GM12878 (cell line): ENCODE measurements at regions of chr17 and their contacts with region 1.

Region 1: GRCh38 chr17:47949136-47949759 is 7.9 kb downstream of the PNPO start:
- DNase-seq: peak; percentile 53
- ATAC-seq: peak; percentile 92
- H3K4me3 ChIP-seq: peak overlapping the region; percentile 41; the same call in 1 of the 2 replicates
- H3K27ac ChIP-seq: peak overlapping the region; percentile 74
- H3K4me1 ChIP-seq: peaks cover 44% of the 10 kb centered on the region
- H3K27me3 ChIP-seq: no peaks in the 10 kb centered on the region
- CTCF ChIP-seq: peak; percentile 91 to 94 (median 94)
- EP300 ChIP-seq: peak in 1 of 2 experiments; percentile 45; a peak in 1 of 4 replicates
- POLR2A ChIP-seq: no peak
- RAD21 ChIP-seq: peak; percentile 86

Region 2: DNA sequence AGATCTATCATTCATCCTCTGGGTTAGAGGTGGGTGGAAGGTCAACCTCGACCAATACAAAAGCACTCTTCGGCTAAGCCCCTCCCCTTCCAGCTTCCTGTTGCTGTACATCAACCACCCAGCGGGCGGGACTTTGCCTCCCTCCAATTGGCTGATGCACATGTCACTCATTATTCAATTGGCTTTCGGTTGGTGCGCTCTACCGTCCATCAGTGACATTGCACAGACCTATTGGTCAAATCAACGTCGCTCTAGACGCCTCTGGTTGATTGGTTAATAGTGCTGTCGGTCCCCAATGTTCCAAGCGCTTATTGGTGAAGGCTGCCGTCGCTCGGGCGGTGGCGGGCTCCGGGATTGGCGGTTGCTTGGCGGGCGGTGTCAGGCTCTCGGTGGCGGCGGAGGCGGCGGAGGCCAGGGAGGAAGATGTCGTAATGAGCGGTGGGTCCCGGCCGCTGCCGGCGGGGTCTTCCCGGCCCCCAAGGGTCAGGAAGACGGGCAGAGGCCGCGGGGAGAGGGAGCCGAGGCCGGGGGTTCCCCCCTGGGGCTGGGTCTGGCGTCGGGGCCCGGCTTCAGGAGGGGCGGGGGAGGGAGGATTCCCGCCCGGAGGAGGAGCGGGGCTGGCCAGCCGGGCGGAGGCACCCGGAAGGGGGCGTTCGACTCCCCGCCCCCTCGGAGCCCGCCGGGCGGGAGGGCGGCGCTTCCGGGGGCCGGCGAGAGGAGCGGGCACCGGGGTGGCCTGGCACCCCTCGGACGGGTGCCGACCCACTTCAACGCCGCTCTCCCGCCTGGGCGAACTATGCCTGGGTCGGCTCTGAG is 53.2 kb before region 1 on chr17 and contains the start of gene SP2:
- CTCF ChIA-PET with region 1: interaction called, 24 read pairs
- POLR2A ChIA-PET with region 1: interaction called, 18 read pairs
- RAD21 ChIA-PET with region 1: interaction called, 10 read pairs
- SMC1A ChIA-PET with region 1: interaction called, 19 read pairs
- in situ Hi-C with region 1: no loop called
- intact Hi-C with region 1: no loop called
- DNase-seq: peak; percentile 100
- ATAC-seq: peak; percentile 94
- H3K4me3 ChIP-seq: peak within 1 kb of the TSS; percentile 95
- H3K27ac ChIP-seq: peak within 1 kb of the TSS; percentile 92
- H3K4me1 ChIP-seq: peaks cover 16% of the 10 kb centered on the region
- H3K27me3 ChIP-seq: no peaks in the 10 kb centered on the region
- CTCF ChIP-seq: no peak; a peak in 2 of 6 replicates
- EP300 ChIP-seq: no peak
- POLR2A ChIP-seq: peak; percentile 80
- RAD21 ChIP-seq: no peak
- polyA plus RNA-seq, gene SP2: 1.2 to 1.9 TPM

Region 3: GRCh38 chr17:47935961-47936360 is 13.3 kb before region 1 on chr17:
- CTCF ChIA-PET with region 1: interaction called, 89 read pairs
- POLR2A ChIA-PET with region 1: interaction called, 9 read pairs
- RAD21 ChIA-PET with region 1: interaction called, 11 read pairs
- SMC1A ChIA-PET with region 1: interaction called, 9 read pairs
- in situ Hi-C with region 1: no loop called
- intact Hi-C with region 1: no loop called
- DNase-seq: no peak
- ATAC-seq: no peak
- H3K4me3 ChIP-seq: no peak overlapping the region
- H3K27ac ChIP-seq: no peak overlapping the region
- H3K4me1 ChIP-seq: peaks cover 25% of the 10 kb centered on the region
- H3K27me3 ChIP-seq: no peaks in the 10 kb centered on the region
- CTCF ChIP-seq: no peak
- EP300 ChIP-seq: no peak
- POLR2A ChIP-seq: no peak
- RAD21 ChIP-seq: no peak

Region 4: DNA sequence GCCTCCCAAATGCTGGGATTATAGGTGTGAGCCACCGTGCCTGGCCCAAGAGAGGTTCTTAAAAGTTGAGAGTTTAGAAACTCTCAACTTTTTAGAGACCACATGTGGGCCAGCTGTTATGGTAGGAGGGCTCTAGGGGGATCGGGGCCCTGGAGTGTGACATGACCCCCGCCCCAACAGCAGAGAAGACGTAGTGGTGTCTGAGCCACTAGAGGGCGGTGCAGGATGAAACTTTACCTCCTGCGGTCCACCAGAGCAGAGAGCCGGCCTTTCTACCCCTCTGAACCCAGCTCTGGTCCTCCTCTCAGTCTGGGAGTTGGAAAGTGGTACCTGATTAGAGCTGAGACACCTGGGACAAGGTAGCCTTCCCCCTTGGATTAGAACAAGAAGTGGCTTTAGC is 29.1 kb after region 1 on chr17:
- CTCF ChIA-PET with region 1: interaction called, 463 read pairs
- POLR2A ChIA-PET with region 1: no interaction called
- RAD21 ChIA-PET with region 1: interaction called, 30 read pairs
- SMC1A ChIA-PET with region 1: interaction called, 139 read pairs
- in situ Hi-C with region 1: no loop called
- intact Hi-C with region 1: no loop called
- DNase-seq: no peak
- ATAC-seq: peak; percentile 98
- H3K4me3 ChIP-seq: no peak overlapping the region
- H3K27ac ChIP-seq: no peak overlapping the region
- H3K4me1 ChIP-seq: no peaks in the 10 kb centered on the region; the same call in 1 of the 2 replicates
- H3K27me3 ChIP-seq: no peaks in the 10 kb centered on the region
- CTCF ChIP-seq: peak; percentile 73 to 86 (median 77)
- EP300 ChIP-seq: no peak
- POLR2A ChIP-seq: no peak
- RAD21 ChIP-seq: peak; percentile 86

Region 5: DNA sequence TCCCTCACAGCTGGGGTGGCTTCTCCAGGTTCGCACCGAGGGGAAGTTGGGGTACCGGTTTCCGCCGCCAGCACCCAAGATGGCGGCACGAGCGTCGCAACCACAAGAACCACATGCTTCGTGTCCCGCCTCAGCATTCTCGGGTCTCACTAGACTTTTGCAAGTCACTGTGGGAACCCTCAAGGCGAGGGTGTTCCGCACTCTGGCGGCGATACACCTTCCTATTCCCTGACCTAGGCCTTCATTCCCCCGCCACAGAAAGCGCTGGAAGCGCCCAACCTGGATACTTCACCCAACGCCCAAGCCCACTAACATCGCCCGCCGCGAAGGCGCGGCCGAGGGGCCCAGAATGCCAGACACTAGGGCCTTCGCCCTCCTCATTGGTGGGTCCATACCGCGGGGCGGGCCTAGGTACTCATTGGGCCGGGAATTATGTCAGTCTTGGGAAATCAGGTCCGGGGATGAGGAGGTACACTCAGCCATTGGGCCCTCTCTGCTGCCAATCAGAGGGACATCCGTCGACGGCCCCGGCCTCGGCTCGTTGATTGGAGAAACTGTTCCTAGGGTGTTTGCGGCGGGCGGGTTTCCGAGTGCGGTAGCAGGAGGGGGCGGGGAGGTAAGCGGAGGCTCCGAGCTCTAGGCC is 98.6 kb after region 1 on chr17 and contains the start of gene NFE2L1:
- CTCF ChIA-PET with region 1: interaction called, 11 read pairs
- POLR2A ChIA-PET with region 1: no interaction called
- RAD21 ChIA-PET with region 1: interaction called, 4 read pairs
- SMC1A ChIA-PET with region 1: no interaction called
- in situ Hi-C with region 1: no loop called
- intact Hi-C with region 1: no loop called
- DNase-seq: peak; percentile 99
- ATAC-seq: peak; percentile 93
- H3K4me3 ChIP-seq: peak within 1 kb of the TSS; percentile 97
- H3K27ac ChIP-seq: peak within 1 kb of the TSS; percentile 93
- H3K4me1 ChIP-seq: peaks cover 12% of the 10 kb centered on the region; the same call in 1 of the 2 replicates
- H3K27me3 ChIP-seq: no peaks in the 10 kb centered on the region
- CTCF ChIP-seq: no peak
- EP300 ChIP-seq: peak in 1 of 2 experiments; percentile 37; a peak in 1 of 4 replicates
- POLR2A ChIP-seq: peak; percentile 96
- RAD21 ChIP-seq: no peak
- polyA plus RNA-seq, gene NFE2L1: 3.8 to 4.1 TPM